Cardiac septum (tissue), 1 donor: ENCODE measurements at regions of chr6 and their contacts with region 1.

Region 1: GRCh38 chr6:27479319-27480182 is 6.6 kb upstream of the ZNF184 start:
- DNase-seq: no peak

Region 2: GRCh38 chr6:27177485-27178406 is 301.8 kb before region 1 on chr6:
- intact Hi-C with region 1: loop called (anchors 5 kb)
- DNase-seq: peak; percentile 84

Region 3: GRCh38 chr6:27359231-27359630 is 120.3 kb before region 1 on chr6:
- intact Hi-C with region 1: no loop called
- DNase-seq: no peak

Region 4: DNA sequence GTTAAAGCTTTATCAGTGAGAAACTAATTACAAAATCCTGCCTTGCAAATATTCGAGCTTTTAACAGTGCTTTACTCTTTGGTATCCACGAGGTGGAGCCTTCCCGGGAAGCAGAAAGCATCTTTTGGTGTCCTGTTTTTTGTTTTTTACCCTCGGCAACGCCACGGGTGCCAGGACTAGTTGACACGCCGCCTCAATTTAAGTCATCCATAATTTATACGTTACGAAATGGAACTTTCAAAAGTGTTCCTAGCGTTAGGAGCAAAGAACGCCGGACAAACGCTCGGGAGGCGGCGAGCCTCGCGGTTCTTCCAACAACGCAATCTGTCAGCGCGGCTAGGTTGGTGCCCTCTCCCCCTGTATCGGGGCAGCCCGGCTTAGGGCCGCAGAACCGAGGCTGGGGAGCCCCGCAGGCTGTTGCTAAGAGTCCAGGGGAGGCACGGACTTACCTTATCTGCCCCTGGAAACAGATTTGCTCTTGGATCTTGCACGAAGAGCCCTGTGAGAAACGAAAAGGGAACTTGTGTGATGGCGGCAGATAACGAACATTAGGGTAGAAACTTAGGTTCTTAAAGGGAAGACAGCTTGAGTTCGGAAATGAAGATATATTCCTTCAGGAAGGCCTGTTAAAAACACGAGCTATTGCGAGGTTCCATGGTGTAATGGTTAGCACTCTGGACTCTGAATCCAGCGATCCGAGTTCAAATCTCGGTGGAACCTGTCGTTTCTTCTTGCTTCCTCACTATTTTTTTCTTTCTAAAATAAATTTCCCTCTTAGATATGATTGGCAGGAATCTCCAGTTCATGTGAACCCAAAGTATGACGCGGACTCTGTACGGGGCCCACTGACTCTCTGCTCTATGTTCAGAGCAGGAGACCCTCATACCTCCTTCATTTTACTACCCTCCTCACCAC is 39.6 kb after region 1 on chr6:
- intact Hi-C with region 1: loop called (anchors 5 kb)
- DNase-seq: no peak